Naive thymus-derived CD8-positive, alpha-beta T cell (primary cell): ENCODE measurements at regions of chr16 and their contacts with region 1.

Region 1: DNA sequence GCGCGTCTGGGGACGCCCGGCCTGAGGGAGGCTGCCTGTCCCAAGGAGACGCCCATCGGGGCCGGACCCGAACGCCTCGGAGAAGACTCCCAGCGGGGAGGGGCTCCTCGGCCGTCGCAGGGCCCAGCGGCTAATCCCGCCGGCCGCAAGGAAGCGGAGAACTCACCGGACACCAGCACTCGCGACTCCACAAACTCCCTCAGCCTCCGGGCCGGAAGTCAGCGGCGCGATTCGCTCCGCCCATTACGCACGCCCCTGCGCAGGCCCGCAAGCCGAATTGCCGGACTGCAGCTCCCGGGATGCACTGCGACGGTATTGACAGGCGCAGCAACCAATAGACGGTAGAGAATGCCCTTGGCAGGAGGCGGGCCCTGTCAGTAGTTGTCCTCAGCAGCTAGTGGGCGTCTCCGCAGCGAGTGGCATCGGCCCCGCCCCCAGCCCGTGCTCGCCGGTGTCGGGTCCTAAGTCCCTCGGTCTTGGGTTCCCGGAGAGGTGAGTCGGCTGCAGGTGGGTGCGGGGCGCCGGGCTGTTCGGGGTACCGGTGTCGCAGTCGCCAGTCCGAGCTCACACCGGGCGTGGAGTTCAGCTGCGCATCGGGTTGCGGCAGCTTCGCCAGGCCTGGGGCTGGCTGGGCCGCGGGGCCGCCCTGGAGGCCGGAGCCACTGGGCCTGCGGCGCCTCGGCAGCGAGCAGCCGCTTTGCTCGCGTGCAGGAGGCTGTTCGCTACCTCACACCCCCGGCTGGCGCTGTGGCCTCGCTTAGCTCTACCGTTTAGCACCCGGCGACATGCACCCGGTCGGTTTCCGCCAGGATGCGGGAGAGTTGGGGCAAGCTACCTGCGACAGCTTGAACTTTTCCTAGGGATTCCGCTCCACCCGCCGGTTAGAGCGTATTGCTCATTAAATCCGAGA is at the starts of genes ZNF174 and ZSCAN32:
- DNase-seq: peak; percentile 94 to 99 (median 98)
- ATAC-seq: peak; percentile 95 to 97
- H3K4me3 Mint-ChIP-seq: peak within 1 kb of the TSS; percentile 88 to 97 (median 95)
- H3K27ac Mint-ChIP-seq: peak within 1 kb of the TSS; percentile 85 to 96 (median 90)
- H3K4me1 Mint-ChIP-seq: peaks cover 29 to 70% (median 55%) of the 10 kb centered on the region in 4 donors
- H3K27me3 Mint-ChIP-seq: no peaks in the 10 kb centered on the region
- polyA plus RNA-seq, gene ZNF174: 12.3 to 18.8 (median 14.0) TPM
- polyA plus RNA-seq, gene ZSCAN32: 8.6 to 20.8 (median 19.0) TPM

Region 2: DNA sequence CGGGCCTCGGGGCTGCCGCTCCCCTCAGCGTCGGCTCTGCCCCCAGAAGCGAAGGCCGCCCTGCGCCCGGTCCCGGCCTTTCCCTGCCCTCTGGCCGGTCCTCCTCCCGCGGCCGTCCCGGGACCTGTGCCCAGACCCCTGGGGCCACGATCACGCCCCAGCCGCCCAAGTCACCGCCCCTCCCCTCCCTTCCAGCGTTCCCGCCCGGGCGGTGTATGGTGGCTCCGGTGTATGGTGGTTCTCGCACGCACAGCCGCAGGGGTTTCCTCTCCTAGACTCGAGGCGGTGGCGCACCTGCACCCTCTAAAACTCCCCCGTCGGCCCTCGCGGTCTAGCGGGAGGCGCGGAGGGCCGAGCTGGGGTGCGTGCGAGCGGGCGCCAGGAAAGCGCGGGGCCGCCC is 105.8 kb before region 1 on chr16:
- POLR2A ChIA-PET with region 1: no interaction called
- DNase-seq: no peak
- ATAC-seq: no peak
- H3K4me3 Mint-ChIP-seq: no peak overlapping the region
- H3K27ac Mint-ChIP-seq: no peak overlapping the region
- H3K4me1 Mint-ChIP-seq: peaks cover 0 to 11% (median 0%) of the 10 kb centered on the region in 4 donors
- H3K27me3 Mint-ChIP-seq: no peaks in the 10 kb centered on the region

Region 3: GRCh38 chr16:3305109-3306068 is 95.6 kb before region 1 on chr16 and contains the starts of genes TIGD7 and ZNF75A:
- POLR2A ChIA-PET with region 1: interaction called, 22 read pairs
- DNase-seq: peak; percentile 67 to 93 (median 84)
- ATAC-seq: peak; percentile 93 to 96
- H3K4me3 Mint-ChIP-seq: peak within 1 kb of the TSS; percentile 75 to 90 (median 84)
- H3K27ac Mint-ChIP-seq: peak within 1 kb of the TSS; percentile 37 to 94 (median 84)
- H3K4me1 Mint-ChIP-seq: peaks cover 9 to 31% (median 20%) of the 10 kb centered on the region in 4 donors
- H3K27me3 Mint-ChIP-seq: no peaks in the 10 kb centered on the region
- polyA plus RNA-seq, gene TIGD7: 5.8 to 7.0 (median 5.8) TPM
- polyA plus RNA-seq, gene ZNF75A: 18.2 to 32.3 (median 23.6) TPM

Region 4: GRCh38 chr16:3364774-3365427 is 36.1 kb before region 1 on chr16:
- POLR2A ChIA-PET with region 1: interaction called, 27 read pairs
- DNase-seq: peak; percentile 69 to 96 (median 89)
- ATAC-seq: peak; percentile 93
- H3K4me3 Mint-ChIP-seq: peak overlapping the region; percentile 77 to 93 (median 86)
- H3K27ac Mint-ChIP-seq: peak overlapping the region; percentile 84 to 96 (median 92)
- H3K4me1 Mint-ChIP-seq: peaks cover 4 to 12% (median 6%) of the 10 kb centered on the region in 4 donors
- H3K27me3 Mint-ChIP-seq: peaks cover 13 to 19% (median 15%) of the 10 kb centered on the region in 5 donors

Region 5: GRCh38 chr16:3443108-3444031 is 42.3 kb after region 1 on chr16 and contains the starts of genes NAA60 and ZNF597:
- POLR2A ChIA-PET with region 1: interaction called, 10 read pairs
- DNase-seq: peak; percentile 54 to 89 (median 80)
- ATAC-seq: peak; percentile 93 to 97
- H3K4me3 Mint-ChIP-seq: peak within 1 kb of the TSS; percentile 92 to 99 (median 95)
- H3K27ac Mint-ChIP-seq: peak within 1 kb of the TSS; percentile 88 to 99 (median 96)
- H3K4me1 Mint-ChIP-seq: peaks cover 5 to 48% (median 28%) of the 10 kb centered on the region in 4 donors
- H3K27me3 Mint-ChIP-seq: no peaks in the 10 kb centered on the region
- polyA plus RNA-seq, gene NAA60: 36.9 to 56.1 (median 44.4) TPM
- polyA plus RNA-seq, gene ZNF597: 1.1 to 2.3 (median 1.9) TPM